MCF 10A (cell line): ENCODE measurements at regions of chr10 and their contacts with region 1.

Region 1: DNA sequence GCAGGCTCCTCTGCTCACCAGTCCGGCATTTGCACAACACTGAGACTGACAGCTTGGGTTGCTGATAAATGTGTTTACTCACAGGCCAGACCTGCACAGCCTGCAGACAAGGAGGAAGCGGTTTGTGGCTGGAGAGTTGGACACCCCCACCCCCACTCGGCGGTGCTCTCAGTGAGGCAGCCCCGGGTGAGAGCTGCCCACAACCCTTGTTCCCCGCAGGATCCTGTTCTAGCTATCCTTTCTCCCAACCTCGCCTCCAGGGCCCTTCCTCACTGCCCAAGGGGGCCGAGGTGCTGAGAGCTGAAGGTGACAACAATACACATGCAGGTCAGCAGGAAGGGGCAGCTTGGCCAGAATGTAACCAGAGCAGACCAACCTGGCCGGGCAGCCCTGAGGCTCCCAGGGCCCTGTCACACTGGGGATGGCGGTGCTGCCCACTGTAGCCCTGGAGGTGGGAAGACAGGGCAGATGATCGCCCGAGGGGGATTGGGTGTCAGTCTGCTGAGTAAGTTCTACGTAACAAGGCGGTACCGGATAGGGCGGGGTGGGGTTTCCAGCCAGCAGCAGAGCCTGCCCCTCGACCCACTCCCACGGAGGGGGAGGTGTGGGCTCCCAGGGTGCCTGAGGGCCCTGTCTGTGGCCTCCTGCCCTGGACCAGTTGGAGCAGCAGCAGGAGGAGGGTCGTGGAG is 2.1 kb upstream of the ADAM8 start:
- DNase-seq: peak; percentile 90
- H3K4me3 Mint-ChIP-seq: peak overlapping the region; percentile 48
- H3K27ac Mint-ChIP-seq: peak overlapping the region; percentile 85
- H3K4me1 Mint-ChIP-seq: peaks cover 16% of the 10 kb centered on the region
- H3K27me3 Mint-ChIP-seq: no peaks in the 10 kb centered on the region
- CTCF ChIP-seq: no peak

Region 2: GRCh38 chr10:133262696-133263095 is 16.0 kb before region 1 on chr10:
- CTCF ChIA-PET with region 1: interaction called, 15 read pairs
- POLR2A ChIA-PET with region 1: interaction called, 45 read pairs
- intact Hi-C with region 1: loop called (anchors 2 kb)
- DNase-seq: no peak
- H3K4me3 Mint-ChIP-seq: no peak overlapping the region
- H3K27ac Mint-ChIP-seq: no peak overlapping the region
- H3K4me1 Mint-ChIP-seq: peaks cover 39% of the 10 kb centered on the region
- H3K27me3 Mint-ChIP-seq: no peaks in the 10 kb centered on the region
- CTCF ChIP-seq: no peak